Activated T-helper 2 cell treated with anti-CD3 and anti-CD28 coated beads, Interferon-gamma antibody, Interleukin-2, Interleukin-4, amounts not matched to agents 10 μg/mL and 5 μg/mL and 100 μg/mL, durations not matched to agents 14 hours and 24 hours and 36 hours (primary cell): ENCODE measurements at regions of chr6 and their contacts with region 1.

Region 1: DNA sequence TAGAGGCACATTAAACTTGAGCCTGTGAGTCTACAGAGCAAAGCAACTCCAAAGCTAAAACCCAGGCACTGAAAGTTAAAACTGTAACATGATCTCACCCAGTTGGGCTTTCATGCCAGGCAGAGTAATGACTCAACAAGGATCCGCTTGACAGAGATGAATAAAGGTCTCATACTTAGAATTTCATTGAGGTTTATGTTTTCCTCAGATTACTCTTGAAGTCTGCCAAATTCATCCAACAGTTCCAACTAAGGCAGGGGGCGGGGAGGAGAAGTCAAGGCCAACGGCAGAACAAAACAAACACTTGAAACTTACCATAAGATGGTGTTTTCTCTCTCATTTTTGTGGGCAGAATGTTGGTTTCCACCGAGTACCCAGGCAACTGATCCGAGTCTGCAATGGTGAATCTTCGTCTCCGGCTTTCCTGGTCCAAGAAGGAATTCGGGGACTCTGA is 54.0 kb upstream of the IPCEF1 start:
- DNase-seq: no peak
- H3K4me3 Mint-ChIP-seq: no peak overlapping the region
- H3K27ac Mint-ChIP-seq: peak overlapping the region; percentile 70
- H3K4me1 Mint-ChIP-seq: peaks cover 18% of the 10 kb centered on the region
- H3K27me3 Mint-ChIP-seq: no peaks in the 10 kb centered on the region

Region 2: DNA sequence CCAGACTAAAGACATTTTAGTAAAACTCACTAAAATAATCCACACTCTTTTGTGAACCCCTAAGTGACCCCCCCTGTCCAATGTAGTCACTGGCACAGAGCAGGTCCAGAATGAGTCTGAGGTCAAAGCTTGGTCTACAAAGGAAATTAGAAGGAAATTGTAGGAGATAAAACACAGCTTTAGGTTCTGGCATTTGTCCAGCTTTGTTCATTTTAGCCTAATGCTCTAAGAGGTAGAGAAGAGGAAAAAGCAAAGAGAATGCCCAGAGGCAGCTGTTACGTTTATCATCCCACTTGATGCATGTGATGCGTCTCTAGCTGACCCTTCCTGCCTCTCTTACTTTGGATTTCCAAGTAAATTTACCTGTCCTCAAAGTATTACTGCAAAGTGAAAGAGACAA is 37.3 kb after region 1 on chr6:
- intact Hi-C with region 1: loop called (anchors 1 kb)
- DNase-seq: no peak
- H3K4me3 Mint-ChIP-seq: no peak overlapping the region
- H3K27ac Mint-ChIP-seq: no peak overlapping the region
- H3K4me1 Mint-ChIP-seq: no peaks in the 10 kb centered on the region
- H3K27me3 Mint-ChIP-seq: peaks cover 10% of the 10 kb centered on the region

Region 3: GRCh38 chr6:154543628-154544027 is 133.0 kb after region 1 on chr6:
- intact Hi-C with region 1: no loop called
- DNase-seq: no peak
- H3K4me3 Mint-ChIP-seq: no peak overlapping the region
- H3K27ac Mint-ChIP-seq: no peak overlapping the region
- H3K4me1 Mint-ChIP-seq: no peaks in the 10 kb centered on the region
- H3K27me3 Mint-ChIP-seq: peaks cover 2% of the 10 kb centered on the region

Region 4: GRCh38 chr6:154622618-154623336 is 212.1 kb after region 1 on chr6:
- intact Hi-C with region 1: no loop called
- DNase-seq: no peak
- H3K4me3 Mint-ChIP-seq: no peak overlapping the region
- H3K27ac Mint-ChIP-seq: no peak overlapping the region
- H3K4me1 Mint-ChIP-seq: no peaks in the 10 kb centered on the region
- H3K27me3 Mint-ChIP-seq: peaks cover 3% of the 10 kb centered on the region